GM12878 (cell line): ENCODE measurements at regions of chr10 and their contacts with region 1.

Region 1: GRCh38 chr10:80599424-80599847 is 61.7 kb downstream of the SH2D4B start:
- DNase-seq: peak; percentile 57
- ATAC-seq: peak; percentile 79
- H3K4me3 ChIP-seq: no peak overlapping the region
- H3K27ac ChIP-seq: no peak overlapping the region; the same call in 1 of the 2 replicates
- H3K4me1 ChIP-seq: peaks cover 17% of the 10 kb centered on the region
- H3K27me3 ChIP-seq: no peaks in the 10 kb centered on the region
- CTCF ChIP-seq: peak; percentile 75 to 96 (median 90)
- EP300 ChIP-seq: peak in 1 of 2 experiments; percentile 46; a peak in 1 of 4 replicates
- POLR2A ChIP-seq: no peak
- RAD21 ChIP-seq: peak; percentile 71

Region 2: DNA sequence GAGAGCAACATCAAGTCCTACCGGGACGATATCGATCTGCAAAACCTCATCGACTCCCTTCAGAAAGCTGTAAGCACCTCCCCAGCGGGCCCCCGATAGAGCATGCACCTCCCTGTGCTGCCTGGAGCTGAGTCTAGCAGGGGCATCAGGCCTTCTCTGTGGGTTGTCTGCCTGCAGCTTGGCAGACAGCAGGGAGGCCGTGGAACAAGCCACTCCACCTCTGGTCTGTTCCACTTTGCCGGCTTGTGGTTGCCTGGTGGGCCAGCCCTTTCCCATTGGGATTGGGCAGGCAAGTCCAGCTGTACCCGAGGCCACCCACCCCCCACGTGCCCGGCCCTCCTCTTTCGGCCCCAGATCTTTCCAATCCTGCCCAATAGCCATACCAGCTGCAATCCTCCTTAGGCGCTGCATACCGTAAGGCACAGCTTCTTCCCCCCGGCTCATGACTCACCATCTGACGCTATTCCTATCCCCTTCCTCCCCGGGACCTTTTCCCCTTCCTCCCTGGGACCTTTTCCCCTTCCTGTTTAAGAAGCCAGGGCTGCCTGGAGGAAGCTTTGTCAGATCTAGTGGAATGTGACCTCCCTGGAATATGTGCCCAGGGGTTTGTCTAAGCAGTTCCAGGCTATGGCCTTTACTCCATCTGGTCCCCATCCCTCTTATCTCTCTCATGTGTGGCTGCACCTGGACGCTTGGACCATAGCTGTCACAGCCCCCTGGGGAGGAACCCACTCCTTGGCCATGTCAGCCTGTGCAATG is 89.9 kb before region 1 on chr10:
- CTCF ChIA-PET with region 1: interaction called, 31 read pairs
- POLR2A ChIA-PET with region 1: no interaction called
- RAD21 ChIA-PET with region 1: interaction called, 21 read pairs
- SMC1A ChIA-PET with region 1: interaction called, 3 read pairs
- in situ Hi-C with region 1: no loop called
- intact Hi-C with region 1: no loop called
- DNase-seq: no peak
- ATAC-seq: no peak
- H3K4me3 ChIP-seq: no peak overlapping the region
- H3K27ac ChIP-seq: no peak overlapping the region
- H3K4me1 ChIP-seq: no peaks in the 10 kb centered on the region
- H3K27me3 ChIP-seq: no peaks in the 10 kb centered on the region
- CTCF ChIP-seq: no peak
- EP300 ChIP-seq: no peak
- POLR2A ChIP-seq: no peak
- RAD21 ChIP-seq: no peak

Region 3: GRCh38 chr10:80535671-80536365 is 63.6 kb before region 1 on chr10:
- CTCF ChIA-PET with region 1: interaction called, 44 read pairs
- POLR2A ChIA-PET with region 1: interaction called, 6 read pairs
- RAD21 ChIA-PET with region 1: interaction called, 38 read pairs
- SMC1A ChIA-PET with region 1: interaction called, 35 read pairs
- in situ Hi-C with region 1: no loop called
- intact Hi-C with region 1: loop called (anchors 1 kb)
- DNase-seq: no peak
- ATAC-seq: peak; percentile 89
- H3K4me3 ChIP-seq: peak overlapping the region; percentile 83
- H3K27ac ChIP-seq: peak overlapping the region; percentile 91
- H3K4me1 ChIP-seq: peaks cover 14% of the 10 kb centered on the region
- H3K27me3 ChIP-seq: no peaks in the 10 kb centered on the region
- CTCF ChIP-seq: peak; percentile 77 to 82 (median 81)
- EP300 ChIP-seq: peak in 1 of 2 experiments; percentile 7; a peak in 1 of 4 replicates
- POLR2A ChIP-seq: peak; percentile 93
- RAD21 ChIP-seq: peak; percentile 81

Region 4: DNA sequence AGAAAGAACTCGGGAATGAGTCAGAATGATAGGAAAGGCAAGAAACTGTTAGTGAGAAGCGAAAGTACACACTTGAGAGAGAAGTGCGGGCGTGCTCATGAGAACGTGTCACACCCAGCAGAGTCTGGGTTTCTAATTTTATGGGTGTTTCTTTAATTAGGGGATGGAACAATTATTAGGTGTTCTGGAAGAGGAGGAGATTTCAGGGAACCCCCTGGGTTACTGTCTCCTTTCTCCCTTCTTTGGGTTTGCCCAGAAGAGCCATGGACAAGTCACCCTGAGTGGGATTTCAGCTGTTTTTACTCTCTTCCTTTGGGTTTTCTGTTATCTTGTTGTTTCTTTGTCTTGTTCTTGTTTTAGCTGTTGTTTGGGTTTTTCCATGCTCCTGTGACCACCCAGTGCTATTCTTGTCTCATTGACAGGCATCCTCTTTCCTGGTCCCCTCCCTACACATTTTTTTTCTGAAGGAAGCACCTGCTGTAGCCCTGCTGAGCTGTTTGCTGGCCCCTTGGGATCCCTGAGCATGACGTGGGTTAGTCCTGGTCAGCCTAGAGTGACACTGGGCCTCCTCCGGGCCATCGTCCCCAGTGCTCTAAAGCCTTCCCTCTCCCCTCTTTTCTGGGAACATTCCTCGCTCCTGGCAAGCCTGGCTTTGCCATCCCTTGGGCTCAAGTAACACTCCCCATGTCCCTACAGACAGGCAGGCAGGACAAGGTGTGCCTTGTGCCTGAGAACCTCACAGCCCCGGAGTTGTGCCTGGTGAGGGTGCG is 58.3 kb before region 1 on chr10:
- CTCF ChIA-PET with region 1: interaction called, 44 read pairs
- POLR2A ChIA-PET with region 1: interaction called, 6 read pairs
- RAD21 ChIA-PET with region 1: interaction called, 38 read pairs
- SMC1A ChIA-PET with region 1: interaction called, 35 read pairs
- in situ Hi-C with region 1: no loop called
- intact Hi-C with region 1: loop called (anchors 1 kb)
- DNase-seq: peak; percentile 60
- ATAC-seq: peak; percentile 68
- H3K4me3 ChIP-seq: no peak overlapping the region; the same call in 1 of the 2 replicates
- H3K27ac ChIP-seq: peak overlapping the region; percentile 82
- H3K4me1 ChIP-seq: peaks cover 28% of the 10 kb centered on the region
- H3K27me3 ChIP-seq: no peaks in the 10 kb centered on the region
- CTCF ChIP-seq: no peak
- EP300 ChIP-seq: peak in 1 of 2 experiments; percentile 41; a peak in 1 of 4 replicates
- POLR2A ChIP-seq: no peak
- RAD21 ChIP-seq: no peak

Region 5: DNA sequence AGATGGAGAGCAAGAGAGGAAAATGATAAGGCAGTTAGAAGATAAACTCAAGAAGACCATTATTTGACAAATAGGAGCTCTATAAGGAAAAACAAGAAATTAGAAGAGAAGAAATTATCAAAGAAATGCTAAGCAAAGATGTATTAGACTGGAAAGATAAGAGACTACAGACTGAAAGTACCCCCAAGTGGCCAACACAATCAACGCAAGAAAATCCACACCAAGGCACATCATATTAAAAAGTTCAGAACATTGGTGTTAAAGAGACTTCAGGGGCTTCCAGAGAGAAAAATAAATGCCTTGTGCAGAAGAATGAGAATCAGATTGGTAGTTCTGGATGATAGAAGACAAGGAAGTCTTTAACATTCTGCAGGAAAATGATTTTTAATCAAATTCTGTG is 15.8 kb before region 1 on chr10:
- CTCF ChIA-PET with region 1: interaction called, 41 read pairs
- POLR2A ChIA-PET with region 1: interaction called, 7 read pairs
- RAD21 ChIA-PET with region 1: interaction called, 11 read pairs
- SMC1A ChIA-PET with region 1: interaction called, 6 read pairs
- in situ Hi-C with region 1: no loop called
- intact Hi-C with region 1: no loop called
- DNase-seq: no peak
- ATAC-seq: peak; percentile 44; the same call in 1 of the 3 replicates
- H3K4me3 ChIP-seq: no peak overlapping the region
- H3K27ac ChIP-seq: no peak overlapping the region
- H3K4me1 ChIP-seq: peaks cover 2% of the 10 kb centered on the region; the same call in 1 of the 2 replicates
- H3K27me3 ChIP-seq: no peaks in the 10 kb centered on the region
- CTCF ChIP-seq: peak in 1 of 3 experiments; percentile 24; a peak in 1 of 6 replicates
- EP300 ChIP-seq: no peak
- POLR2A ChIP-seq: no peak
- RAD21 ChIP-seq: peak; percentile 35; the same call in 1 of the 2 replicates

Region 6: DNA sequence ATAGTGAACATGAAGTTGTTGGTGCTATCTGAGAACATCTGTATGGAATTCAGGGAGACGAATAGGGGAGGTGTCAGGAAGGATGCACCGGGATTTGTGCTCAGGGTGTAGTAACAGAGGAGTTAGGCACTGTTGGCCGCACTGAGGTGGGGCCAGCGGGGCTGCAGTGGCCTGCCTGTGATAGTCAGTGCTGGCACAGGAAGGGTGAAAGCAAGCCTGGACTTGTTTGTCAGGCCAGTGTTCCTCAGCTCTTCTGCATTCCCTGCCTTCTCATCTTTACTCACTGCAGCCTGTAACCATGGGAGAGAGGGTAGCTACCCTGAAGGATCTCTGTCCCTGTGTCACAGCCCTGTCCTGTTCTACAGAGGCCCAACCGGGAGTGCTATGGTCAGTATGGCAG is 19.6 kb after region 1 on chr10:
- CTCF ChIA-PET with region 1: interaction called, 15 read pairs
- POLR2A ChIA-PET with region 1: no interaction called
- RAD21 ChIA-PET with region 1: no interaction called
- SMC1A ChIA-PET with region 1: no interaction called
- in situ Hi-C with region 1: no loop called
- intact Hi-C with region 1: no loop called
- DNase-seq: no peak
- ATAC-seq: no peak
- H3K4me3 ChIP-seq: no peak overlapping the region
- H3K27ac ChIP-seq: no peak overlapping the region
- H3K4me1 ChIP-seq: no peaks in the 10 kb centered on the region
- H3K27me3 ChIP-seq: no peaks in the 10 kb centered on the region
- CTCF ChIP-seq: no peak
- EP300 ChIP-seq: no peak
- POLR2A ChIP-seq: no peak
- RAD21 ChIP-seq: no peak

Region 7: GRCh38 chr10:81036257-81036656 is 436.8 kb after region 1 on chr10:
- CTCF ChIA-PET with region 1: interaction called, 3 read pairs
- POLR2A ChIA-PET with region 1: no interaction called
- RAD21 ChIA-PET with region 1: no interaction called
- SMC1A ChIA-PET with region 1: no interaction called
- in situ Hi-C with region 1: no loop called
- intact Hi-C with region 1: loop called (anchors 10 kb)
- DNase-seq: peak; percentile 81
- ATAC-seq: peak; percentile 90
- H3K4me3 ChIP-seq: no peak overlapping the region
- H3K27ac ChIP-seq: peak overlapping the region; percentile 65
- H3K4me1 ChIP-seq: peaks cover 26% of the 10 kb centered on the region
- H3K27me3 ChIP-seq: no peaks in the 10 kb centered on the region
- CTCF ChIP-seq: no peak
- EP300 ChIP-seq: peak; percentile 86 to 97; a peak in 3 of 4 replicates
- POLR2A ChIP-seq: no peak
- RAD21 ChIP-seq: no peak